Testis (tissue), 5 donors: ENCODE measurements at regions of chr2 and their contacts with region 1.

Region 1: GRCh38 chr2:202178342-202178958 is 59.9 kb downstream of the SUMO1 start:
- DNase-seq: peak; percentile 84
- H3K4me3 ChIP-seq: no peak overlapping the region
- H3K27ac ChIP-seq: no peak overlapping the region
- H3K4me1 ChIP-seq: no peaks in the 10 kb centered on the region
- H3K27me3 ChIP-seq: no peaks in the 10 kb centered on the region
- CTCF ChIP-seq: peak; percentile 79 to 83 (median 82)
- POLR2A ChIP-seq: no peak

Region 2: GRCh38 chr2:201860636-201861066 is 317.8 kb before region 1 on chr2:
- intact Hi-C with region 1: loop called (anchors 10 kb)
- DNase-seq: peak; percentile 68
- H3K4me3 ChIP-seq: no peak overlapping the region
- H3K27ac ChIP-seq: no peak overlapping the region
- H3K4me1 ChIP-seq: no peaks in the 10 kb centered on the region
- H3K27me3 ChIP-seq: no peaks in the 10 kb centered on the region
- CTCF ChIP-seq: peak; percentile 64 to 86 (median 79)
- POLR2A ChIP-seq: no peak

Region 3: GRCh38 chr2:202508686-202509085 is 330.2 kb after region 1 on chr2:
- intact Hi-C with region 1: no loop called
- DNase-seq: no peak
- H3K4me3 ChIP-seq: no peak overlapping the region
- H3K27ac ChIP-seq: no peak overlapping the region
- H3K4me1 ChIP-seq: no peaks in the 10 kb centered on the region
- H3K27me3 ChIP-seq: no peaks in the 10 kb centered on the region
- CTCF ChIP-seq: no peak
- POLR2A ChIP-seq: no peak